ENCODE measurements at regions of chr13 and their contacts with region 1.

Region 1: GRCh38 chr13:26186118-26186870 is 35.8 kb downstream of the RNF6 start:
- DNase-seq: peak; percentile 93
- ATAC-seq: peak; percentile 98
- H3K4me3 Mint-ChIP-seq: peak overlapping the region; percentile 87
- H3K27ac Mint-ChIP-seq: no peak overlapping the region
- H3K4me1 Mint-ChIP-seq: peaks cover 5% of the 10 kb centered on the region
- H3K27me3 Mint-ChIP-seq: peaks cover 8% of the 10 kb centered on the region; the same call in 1 of the 2 replicates
- CTCF ChIP-seq: 0 out of 2 replicates have a peak, but pooled peaks have one; percentile 17

Region 2: GRCh38 chr13:25977216-25977615 is 209.1 kb before region 1 on chr13:
- CTCF ChIA-PET with region 1: no interaction called
- POLR2A ChIA-PET with region 1: no interaction called
- DNase-seq: peak; percentile 64
- ATAC-seq: peak; percentile 82
- H3K4me3 Mint-ChIP-seq: peak overlapping the region; percentile 28
- H3K27ac Mint-ChIP-seq: peak overlapping the region; percentile 97
- H3K4me1 Mint-ChIP-seq: peaks cover 81% of the 10 kb centered on the region
- H3K27me3 Mint-ChIP-seq: peaks cover 16% of the 10 kb centered on the region
- CTCF ChIP-seq: no peak

Region 3: GRCh38 chr13:26074706-26075105 is 111.6 kb before region 1 on chr13:
- CTCF ChIA-PET with region 1: no interaction called
- POLR2A ChIA-PET with region 1: no interaction called
- DNase-seq: no peak
- ATAC-seq: peak; percentile 51; the same call in 1 of the 2 replicates
- H3K4me3 Mint-ChIP-seq: no peak overlapping the region
- H3K27ac Mint-ChIP-seq: no peak overlapping the region
- H3K4me1 Mint-ChIP-seq: peaks cover 15% of the 10 kb centered on the region
- H3K27me3 Mint-ChIP-seq: no peaks in the 10 kb centered on the region
- CTCF ChIP-seq: no peak

Region 4: DNA sequence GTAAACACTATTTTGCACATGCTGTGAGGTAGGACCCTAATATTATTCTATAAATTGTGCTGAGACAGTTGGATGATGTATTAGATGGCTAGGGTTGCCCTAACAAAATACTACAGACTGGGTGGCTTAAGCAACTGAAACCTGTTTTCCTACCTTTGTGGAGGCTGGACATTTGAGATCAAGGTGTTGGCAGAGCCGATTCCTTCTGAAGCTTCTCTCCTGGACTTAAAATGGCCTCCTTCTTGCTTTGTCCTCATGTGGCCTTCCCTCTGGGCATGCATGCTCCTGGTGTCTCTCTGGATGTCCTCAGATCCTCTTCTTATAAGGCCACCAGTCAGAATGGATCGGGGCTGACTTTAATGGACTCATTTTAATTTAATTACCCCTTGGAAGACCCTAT is 25.7 kb before region 1 on chr13:
- CTCF ChIA-PET with region 1: no interaction called
- POLR2A ChIA-PET with region 1: no interaction called
- DNase-seq: no peak
- ATAC-seq: no peak
- H3K4me3 Mint-ChIP-seq: no peak overlapping the region
- H3K27ac Mint-ChIP-seq: no peak overlapping the region
- H3K4me1 Mint-ChIP-seq: 0 out of 2 replicates have a peak, but pooled peaks cover 2% of the 10 kb centered on the region
- H3K27me3 Mint-ChIP-seq: no peaks in the 10 kb centered on the region
- CTCF ChIP-seq: no peak

Region 5: GRCh38 chr13:26221721-26222519 is 35.6 kb after region 1 on chr13 and contains the start of gene RNF6:
- CTCF ChIA-PET with region 1: interaction called, 13 read pairs
- POLR2A ChIA-PET with region 1: no interaction called
- DNase-seq: peak; percentile 86
- ATAC-seq: peak; percentile 98
- H3K4me3 Mint-ChIP-seq: peak within 1 kb of the TSS; percentile 97
- H3K27ac Mint-ChIP-seq: peak within 1 kb of the TSS; percentile 98
- H3K4me1 Mint-ChIP-seq: peaks cover 17% of the 10 kb centered on the region
- H3K27me3 Mint-ChIP-seq: peaks cover 10% of the 10 kb centered on the region
- CTCF ChIP-seq: no peak
- total RNA-seq, gene RNF6: 15.7 to 17.4 TPM (median 16.2 TPM) in 3 replicates

Region 6: DNA sequence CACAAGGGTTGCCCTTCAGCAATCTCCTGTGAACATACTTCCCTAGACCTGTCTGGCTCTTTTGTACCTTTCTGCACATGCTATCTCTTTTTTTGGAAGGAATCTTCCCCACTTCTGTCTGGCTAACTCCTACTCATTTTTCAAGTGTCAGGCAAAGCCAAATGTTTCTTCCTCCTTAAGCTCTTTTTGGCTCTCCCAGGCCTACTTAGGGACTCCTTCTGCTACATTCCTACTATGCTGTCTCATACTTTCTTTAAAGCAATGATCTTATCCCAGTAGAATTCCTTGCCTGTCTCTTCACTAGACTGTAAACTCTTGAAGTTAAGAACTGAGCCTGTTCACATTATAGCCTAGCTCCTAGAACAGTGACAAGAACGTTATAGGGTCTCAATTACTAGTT is 256.2 kb after region 1 on chr13:
- CTCF ChIA-PET with region 1: interaction called, 11 read pairs
- POLR2A ChIA-PET with region 1: no interaction called
- DNase-seq: no peak
- ATAC-seq: no peak
- H3K4me3 Mint-ChIP-seq: no peak overlapping the region
- H3K27ac Mint-ChIP-seq: no peak overlapping the region
- H3K4me1 Mint-ChIP-seq: no peaks in the 10 kb centered on the region
- H3K27me3 Mint-ChIP-seq: no peaks in the 10 kb centered on the region; the same call in 1 of the 2 replicates
- CTCF ChIP-seq: no peak

Region 7: DNA sequence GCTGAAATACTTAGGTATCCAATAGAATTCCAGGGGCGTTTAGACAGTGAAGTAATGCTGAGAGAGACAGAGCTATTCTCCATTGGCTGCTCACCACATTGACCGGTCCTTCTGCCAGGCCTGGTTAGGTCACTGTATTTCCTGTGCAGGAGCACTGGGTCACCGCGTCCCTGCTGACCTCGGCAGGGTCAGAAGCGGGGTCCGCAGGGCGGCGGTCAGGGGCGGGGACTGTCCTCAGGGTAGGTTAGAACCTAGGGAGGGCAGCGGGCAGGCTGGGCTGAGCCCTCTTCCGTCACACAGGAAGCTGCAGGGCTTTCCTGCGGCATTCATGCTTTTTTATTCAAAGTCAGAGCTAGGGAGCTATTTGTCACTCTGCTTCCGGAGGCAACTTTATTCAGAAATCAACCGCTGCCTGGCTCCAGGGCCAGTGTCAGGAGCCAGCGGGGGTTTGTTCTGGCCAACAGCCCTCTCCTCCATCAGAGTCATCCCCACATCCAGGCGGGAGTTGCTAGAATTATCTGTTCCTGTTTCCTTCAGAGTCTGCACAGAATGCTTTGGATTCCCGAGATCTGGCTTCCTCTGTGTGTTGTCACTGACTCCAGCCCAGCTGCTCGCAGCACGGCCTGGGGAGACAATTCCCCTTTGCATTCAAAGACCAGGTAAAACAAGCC is 290.0 kb after region 1 on chr13:
- CTCF ChIA-PET with region 1: interaction called, 37 read pairs
- POLR2A ChIA-PET with region 1: interaction called, 3 read pairs
- DNase-seq: peak; percentile 51
- ATAC-seq: peak; percentile 60
- H3K4me3 Mint-ChIP-seq: peak overlapping the region; percentile 68
- H3K27ac Mint-ChIP-seq: peak overlapping the region; percentile 97
- H3K4me1 Mint-ChIP-seq: peaks cover 53% of the 10 kb centered on the region
- H3K27me3 Mint-ChIP-seq: no peaks in the 10 kb centered on the region
- CTCF ChIP-seq: no peak

Region 8: DNA sequence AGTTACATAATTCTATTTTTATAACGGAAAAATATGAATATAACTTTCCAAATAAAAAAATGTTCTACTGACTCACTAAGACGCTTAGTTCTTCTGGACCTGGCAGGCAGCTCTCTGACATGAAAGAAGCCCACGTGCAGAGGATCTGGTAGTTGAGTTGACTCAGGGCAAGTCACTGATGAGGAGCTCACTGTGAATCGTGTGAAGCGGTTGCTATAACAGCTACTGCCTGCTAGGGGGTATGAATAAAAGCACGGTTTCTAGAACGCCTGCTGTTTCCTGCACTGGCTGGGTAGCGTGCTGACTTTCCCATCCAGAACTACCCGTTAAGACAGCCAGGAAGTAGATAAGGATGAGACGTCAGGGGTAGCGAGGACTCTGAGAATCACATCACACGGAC is 316.5 kb after region 1 on chr13:
- CTCF ChIA-PET with region 1: interaction called, 51 read pairs
- POLR2A ChIA-PET with region 1: no interaction called
- DNase-seq: no peak
- ATAC-seq: peak; percentile 74
- H3K4me3 Mint-ChIP-seq: no peak overlapping the region
- H3K27ac Mint-ChIP-seq: no peak overlapping the region
- H3K4me1 Mint-ChIP-seq: peaks cover 11% of the 10 kb centered on the region
- H3K27me3 Mint-ChIP-seq: no peaks in the 10 kb centered on the region; the same call in 1 of the 2 replicates
- CTCF ChIP-seq: no peak

Region 9: GRCh38 chr13:26605845-26606244 is 419.6 kb after region 1 on chr13:
- CTCF ChIA-PET with region 1: interaction called, 21 read pairs
- POLR2A ChIA-PET with region 1: no interaction called
- DNase-seq: peak; percentile 50
- ATAC-seq: peak; percentile 97
- H3K4me3 Mint-ChIP-seq: no peak overlapping the region
- H3K27ac Mint-ChIP-seq: peak overlapping the region; percentile 58
- H3K4me1 Mint-ChIP-seq: peaks cover 34% of the 10 kb centered on the region
- H3K27me3 Mint-ChIP-seq: no peaks in the 10 kb centered on the region
- CTCF ChIP-seq: no peak

Region 10: DNA sequence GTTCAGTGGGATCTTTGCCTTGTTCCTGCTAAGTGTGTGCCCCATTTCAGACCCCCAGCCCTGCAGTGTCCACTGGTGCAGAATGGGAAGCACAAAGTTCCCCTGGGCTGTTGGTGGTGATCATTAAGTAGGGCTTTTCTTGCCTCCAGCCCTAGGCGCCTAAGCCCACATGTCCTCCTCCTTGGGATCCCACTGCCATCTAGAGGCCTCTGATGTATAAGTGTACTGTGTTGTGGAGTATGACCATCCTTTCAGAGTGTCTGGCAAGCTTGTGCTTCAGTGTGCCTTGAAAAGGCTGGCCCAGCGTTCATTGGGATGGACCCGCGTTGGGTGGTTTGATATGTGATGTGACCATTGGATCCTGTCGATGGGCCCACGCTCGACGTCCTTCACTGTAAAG is 442.4 kb after region 1 on chr13:
- CTCF ChIA-PET with region 1: interaction called, 10 read pairs
- POLR2A ChIA-PET with region 1: no interaction called
- DNase-seq: peak; percentile 22
- ATAC-seq: peak; percentile 96
- H3K4me3 Mint-ChIP-seq: no peak overlapping the region
- H3K27ac Mint-ChIP-seq: peak overlapping the region; percentile 58
- H3K4me1 Mint-ChIP-seq: peaks cover 15% of the 10 kb centered on the region
- H3K27me3 Mint-ChIP-seq: no peaks in the 10 kb centered on the region
- CTCF ChIP-seq: no peak

Measured in WTC11 (cell line).